IMR-90 (cell line): ENCODE measurements at regions of chr17 and their contacts with region 1.

Region 1: DNA sequence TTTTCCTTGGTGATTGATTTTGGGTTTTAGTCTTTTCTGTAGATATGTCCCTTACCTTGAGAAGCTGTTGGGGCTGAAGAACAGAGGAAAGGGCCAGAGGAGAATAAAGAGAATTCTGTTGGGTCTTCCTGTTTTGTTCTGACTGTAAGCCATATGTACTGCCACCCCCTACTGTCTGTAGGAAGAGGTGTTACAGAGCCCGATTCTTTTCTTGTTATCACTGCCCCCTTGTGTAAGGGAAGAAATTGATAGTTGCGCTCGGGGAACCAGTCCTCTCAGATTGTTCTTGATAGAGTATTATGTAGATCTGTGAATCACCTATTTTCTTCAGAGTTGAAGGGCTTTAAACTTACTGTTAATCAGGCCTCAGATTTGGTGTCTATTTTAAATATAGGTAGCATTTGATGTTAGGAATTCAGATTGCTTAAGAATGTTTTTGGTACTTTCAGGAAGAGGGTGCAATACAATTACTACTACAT is 2.4 kb downstream of the TANC2 start:
- DNase-seq: peak; percentile 94
- ATAC-seq: peak; percentile 43
- H3K4me3 ChIP-seq: peak overlapping the region; percentile 90
- H3K27ac ChIP-seq: peak overlapping the region; percentile 32; the same call in 1 of the 2 replicates
- H3K4me1 ChIP-seq: peaks cover 16% of the 10 kb centered on the region
- H3K27me3 ChIP-seq: no peaks in the 10 kb centered on the region
- CTCF ChIP-seq: peak; percentile 99
- POLR2A ChIP-seq: peak; percentile 77
- RAD21 ChIP-seq: peak; percentile 94

Region 2: GRCh38 chr17:62627219-62627910 is 341.1 kb before region 1 on chr17 and contains the start of gene MRC2:
- CTCF ChIA-PET with region 1: no interaction called
- POLR2A ChIA-PET with region 1: no interaction called
- dilution Hi-C with region 1: no loop called
- in situ Hi-C with region 1: no loop called
- intact Hi-C with region 1: loop called (anchors 5 kb)
- DNase-seq: peak; percentile 82
- ATAC-seq: peak; percentile 73
- H3K4me3 ChIP-seq: peak within 1 kb of the TSS; percentile 64
- H3K27ac ChIP-seq: peak within 1 kb of the TSS; percentile 94
- H3K4me1 ChIP-seq: peaks cover 29% of the 10 kb centered on the region
- H3K27me3 ChIP-seq: no peaks in the 10 kb centered on the region
- CTCF ChIP-seq: no peak
- POLR2A ChIP-seq: peak; percentile 90
- RAD21 ChIP-seq: no peak
- total RNA-seq, gene MRC2: 37.5 and 39.3 TPM in 2 replicates

Region 3: DNA sequence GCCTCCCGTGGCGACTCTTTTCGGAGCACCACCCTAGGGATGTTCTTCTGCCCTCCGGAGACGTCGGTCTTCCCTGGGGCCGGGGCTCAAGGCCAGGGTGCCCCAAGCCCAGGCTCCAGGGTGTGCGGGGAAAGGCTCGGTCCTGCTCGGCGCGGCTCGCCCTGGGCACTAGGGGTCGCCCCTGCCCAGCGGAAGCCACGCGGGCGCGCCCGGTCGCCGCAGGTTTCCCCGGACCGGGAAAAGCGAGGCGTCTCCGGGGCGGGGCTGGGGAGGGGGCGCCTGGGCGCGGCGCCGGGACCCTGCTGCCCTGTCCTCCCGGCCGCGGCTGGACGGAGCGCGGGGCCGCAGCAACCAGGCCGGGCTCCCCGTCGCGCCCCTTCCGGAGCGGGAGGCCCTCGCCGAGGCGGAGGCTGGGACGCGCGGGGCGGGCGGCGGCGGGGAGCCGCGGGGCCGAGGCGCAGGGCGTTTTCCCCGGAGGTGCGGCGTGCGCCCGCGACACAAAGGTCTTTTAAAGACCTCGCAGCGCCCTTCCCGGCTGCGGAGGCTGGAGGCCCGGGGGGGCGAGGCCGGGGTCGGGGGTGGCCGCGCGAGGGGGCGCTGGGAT is 264.6 kb before region 1 on chr17:
- CTCF ChIA-PET with region 1: interaction called, 4 read pairs
- POLR2A ChIA-PET with region 1: no interaction called
- dilution Hi-C with region 1: no loop called
- in situ Hi-C with region 1: loop called (anchors 5 kb)
- intact Hi-C with region 1: loop called (anchors 1 kb)
- DNase-seq: peak; percentile 53
- ATAC-seq: peak; percentile 93
- H3K4me3 ChIP-seq: peak overlapping the region; percentile 81
- H3K27ac ChIP-seq: peak overlapping the region; percentile 70
- H3K4me1 ChIP-seq: peaks cover 24% of the 10 kb centered on the region
- H3K27me3 ChIP-seq: no peaks in the 10 kb centered on the region
- CTCF ChIP-seq: peak; percentile 93
- POLR2A ChIP-seq: no peak; the same call in 1 of the 2 replicates
- RAD21 ChIP-seq: peak; percentile 96

Region 4: DNA sequence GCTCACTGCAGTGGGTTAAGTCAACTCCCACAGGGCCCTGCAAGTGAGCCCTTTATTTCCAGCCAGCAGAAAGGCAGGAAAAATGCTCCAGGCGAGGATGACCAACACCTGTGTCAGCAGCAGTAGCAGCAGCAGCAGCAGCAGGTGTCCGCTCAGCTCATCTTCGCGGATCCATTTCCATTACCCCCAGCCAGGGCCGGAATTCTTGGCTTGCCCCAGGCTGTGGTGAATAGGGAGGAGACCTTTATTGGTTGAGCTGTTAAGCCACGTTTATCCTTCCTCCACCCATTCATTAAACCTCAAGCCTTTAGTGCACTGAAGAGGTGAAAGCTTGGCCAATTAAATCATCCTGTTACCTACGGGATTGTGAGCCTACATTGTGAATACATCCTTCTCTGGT is 206.6 kb before region 1 on chr17:
- CTCF ChIA-PET with region 1: no interaction called
- POLR2A ChIA-PET with region 1: no interaction called
- dilution Hi-C with region 1: no loop called
- in situ Hi-C with region 1: no loop called
- intact Hi-C with region 1: loop called (anchors 5 kb)
- DNase-seq: no peak
- ATAC-seq: no peak
- H3K4me3 ChIP-seq: no peak overlapping the region
- H3K27ac ChIP-seq: no peak overlapping the region
- H3K4me1 ChIP-seq: peaks cover 14% of the 10 kb centered on the region
- H3K27me3 ChIP-seq: no peaks in the 10 kb centered on the region
- CTCF ChIP-seq: no peak
- POLR2A ChIP-seq: no peak
- RAD21 ChIP-seq: no peak

Region 5: DNA sequence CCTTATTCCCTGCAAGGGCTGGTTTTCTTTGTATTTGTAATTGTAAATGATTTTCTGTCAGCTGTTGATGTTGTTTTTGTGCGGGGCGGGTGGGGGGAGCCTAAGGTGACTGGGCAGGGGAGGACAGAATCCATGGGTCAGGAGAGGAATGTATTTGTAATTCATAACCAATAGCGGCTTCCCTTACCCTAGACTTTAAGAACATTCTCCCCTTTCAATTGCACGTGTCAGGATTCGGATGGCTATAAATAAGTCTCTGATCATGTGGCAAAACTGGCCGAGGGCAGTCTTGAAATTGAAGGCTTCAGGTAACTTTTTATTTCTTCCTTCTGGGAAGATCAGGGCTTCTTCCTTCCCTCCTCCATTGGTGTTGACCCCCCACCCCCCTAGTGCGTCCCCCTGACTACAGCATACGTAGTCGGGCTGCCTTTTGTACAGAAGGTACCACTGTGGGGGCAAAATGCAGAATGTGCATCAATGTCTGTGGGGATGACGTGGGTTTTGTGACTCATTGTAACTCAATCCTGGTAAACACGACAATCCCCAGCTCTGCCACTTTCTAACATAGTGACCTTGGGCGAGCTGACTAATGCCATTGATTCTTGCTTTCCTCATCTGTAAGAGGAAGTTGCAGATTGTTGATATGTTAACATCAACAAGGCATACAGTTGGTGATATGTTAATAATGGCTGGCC is 176.6 kb before region 1 on chr17:
- CTCF ChIA-PET with region 1: no interaction called
- POLR2A ChIA-PET with region 1: no interaction called
- dilution Hi-C with region 1: no loop called
- in situ Hi-C with region 1: no loop called
- intact Hi-C with region 1: loop called (anchors 1 kb)
- DNase-seq: peak; percentile 100
- ATAC-seq: peak; percentile 52
- H3K4me3 ChIP-seq: no peak overlapping the region
- H3K27ac ChIP-seq: peak overlapping the region; percentile 92
- H3K4me1 ChIP-seq: peaks cover 14% of the 10 kb centered on the region
- H3K27me3 ChIP-seq: no peaks in the 10 kb centered on the region
- CTCF ChIP-seq: no peak
- POLR2A ChIP-seq: no peak; the same call in 1 of the 2 replicates
- RAD21 ChIP-seq: peak; percentile 26

Region 6: GRCh38 chr17:62819475-62820212 is 148.8 kb before region 1 on chr17:
- CTCF ChIA-PET with region 1: no interaction called
- POLR2A ChIA-PET with region 1: interaction called, 4 read pairs
- dilution Hi-C with region 1: no loop called
- in situ Hi-C with region 1: no loop called
- intact Hi-C with region 1: loop called (anchors 2 kb)
- DNase-seq: peak; percentile 99
- ATAC-seq: peak; percentile 94
- H3K4me3 ChIP-seq: peak overlapping the region; percentile 24; the same call in 1 of the 2 replicates
- H3K27ac ChIP-seq: peak overlapping the region; percentile 70
- H3K4me1 ChIP-seq: peaks cover 25% of the 10 kb centered on the region
- H3K27me3 ChIP-seq: no peaks in the 10 kb centered on the region
- CTCF ChIP-seq: no peak
- POLR2A ChIP-seq: peak; percentile 82
- RAD21 ChIP-seq: peak; percentile 47

Region 7: DNA sequence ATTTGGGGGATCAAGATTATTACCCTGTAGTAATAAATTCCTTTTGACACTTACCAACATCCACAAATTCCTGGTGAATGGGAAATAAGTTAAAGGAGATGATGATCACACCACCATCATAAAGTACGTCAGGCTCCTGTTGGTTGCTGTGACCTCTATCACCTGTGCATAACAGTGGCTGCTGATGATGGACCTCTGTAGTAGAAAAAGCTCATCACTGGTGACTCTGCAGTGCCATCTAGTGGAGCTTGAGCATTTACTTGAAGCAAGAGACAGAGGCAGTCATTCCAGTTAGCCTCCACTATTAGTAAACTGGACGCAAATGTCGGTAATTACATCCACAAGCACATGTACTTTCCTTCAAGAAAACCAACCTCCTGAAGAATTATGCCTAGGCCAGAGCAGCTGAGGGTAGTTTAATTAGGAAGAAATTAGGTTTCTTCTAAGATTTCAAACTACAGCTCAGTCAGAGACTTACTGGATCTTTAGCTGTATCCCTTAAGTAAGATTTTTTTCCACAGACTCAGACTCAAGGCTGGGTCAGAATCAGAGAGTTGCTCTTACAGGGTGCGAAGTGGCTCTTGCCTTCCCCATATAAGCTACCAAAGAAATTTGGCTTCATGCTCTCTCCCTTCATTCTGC is 438.3 kb after region 1 on chr17:
- CTCF ChIA-PET with region 1: interaction called, 4 read pairs
- POLR2A ChIA-PET with region 1: interaction called, 8 read pairs
- dilution Hi-C with region 1: no loop called
- in situ Hi-C with region 1: no loop called
- intact Hi-C with region 1: loop called (anchors 1 kb)
- DNase-seq: peak; percentile 97
- ATAC-seq: peak; percentile 84
- H3K4me3 ChIP-seq: no peak overlapping the region
- H3K27ac ChIP-seq: no peak overlapping the region
- H3K4me1 ChIP-seq: peaks cover 10% of the 10 kb centered on the region
- H3K27me3 ChIP-seq: no peaks in the 10 kb centered on the region
- CTCF ChIP-seq: peak; percentile 88
- POLR2A ChIP-seq: no peak
- RAD21 ChIP-seq: peak; percentile 90